Dendritic cell treated with granulocyte-macrophage colony-stimulating factor and Interleukin-4, amounts not matched to agents 40 ng/mL and 50 ng/mL, for 4 days (primary cell): ENCODE measurements at regions of chr1 and their contacts with region 1.

Region 1: GRCh38 chr1:235075188-235075926 is 53.3 kb downstream of the TOMM20 start:
- H3K4me3 Mint-ChIP-seq: peak overlapping the region; percentile 27
- H3K27ac Mint-ChIP-seq: no peak overlapping the region
- H3K4me1 Mint-ChIP-seq: peaks cover 40% of the 10 kb centered on the region
- H3K27me3 Mint-ChIP-seq: no peaks in the 10 kb centered on the region

Region 2: GRCh38 chr1:235050911-235051360 is 24.4 kb before region 1 on chr1:
- intact Hi-C with region 1: loop called (anchors 1 kb)
- H3K4me3 Mint-ChIP-seq: no peak overlapping the region
- H3K27ac Mint-ChIP-seq: peak overlapping the region; percentile 27
- H3K4me1 Mint-ChIP-seq: peaks cover 54% of the 10 kb centered on the region
- H3K27me3 Mint-ChIP-seq: no peaks in the 10 kb centered on the region